Activated T-helper 2 cell treated with anti-CD3 and anti-CD28 coated beads, Interferon-gamma antibody, Interleukin-2, Interleukin-4, amounts not matched to agents 10 μg/mL and 5 μg/mL and 100 μg/mL, durations not matched to agents 14 hours and 24 hours and 36 hours (primary cell): ENCODE measurements at regions of chr14 and their contacts with region 1.

Region 1: GRCh38 chr14:50520947-50521815 is 11.2 kb downstream of the MAP4K5 start:
- DNase-seq: no peak
- H3K4me3 Mint-ChIP-seq: no peak overlapping the region
- H3K27ac Mint-ChIP-seq: peak overlapping the region; percentile 91
- H3K4me1 Mint-ChIP-seq: peaks cover 43% of the 10 kb centered on the region
- H3K27me3 Mint-ChIP-seq: no peaks in the 10 kb centered on the region

Region 2: GRCh38 chr14:49620182-49621113 is 900.7 kb before region 1 on chr14 and contains the starts of genes MGAT2 and RPL36AL:
- intact Hi-C with region 1: loop called (anchors 10 kb)
- DNase-seq: peak; percentile 96
- H3K4me3 Mint-ChIP-seq: peak within 1 kb of the TSS; percentile 91
- H3K27ac Mint-ChIP-seq: peak within 1 kb of the TSS; percentile 94
- H3K4me1 Mint-ChIP-seq: peaks cover 44% of the 10 kb centered on the region
- H3K27me3 Mint-ChIP-seq: no peaks in the 10 kb centered on the region
- total RNA-seq, gene MGAT2: 57.0 and 57.9 TPM in 2 replicates
- total RNA-seq, gene RPL36AL: 278 and 292 TPM in 2 replicates

Region 3: GRCh38 chr14:50038398-50039119 is 482.6 kb before region 1 on chr14:
- intact Hi-C with region 1: loop called (anchors 2 kb)
- DNase-seq: peak; percentile 58
- H3K4me3 Mint-ChIP-seq: peak overlapping the region; percentile 68
- H3K27ac Mint-ChIP-seq: peak overlapping the region; percentile 97
- H3K4me1 Mint-ChIP-seq: peaks cover 48% of the 10 kb centered on the region
- H3K27me3 Mint-ChIP-seq: no peaks in the 10 kb centered on the region

Region 4: DNA sequence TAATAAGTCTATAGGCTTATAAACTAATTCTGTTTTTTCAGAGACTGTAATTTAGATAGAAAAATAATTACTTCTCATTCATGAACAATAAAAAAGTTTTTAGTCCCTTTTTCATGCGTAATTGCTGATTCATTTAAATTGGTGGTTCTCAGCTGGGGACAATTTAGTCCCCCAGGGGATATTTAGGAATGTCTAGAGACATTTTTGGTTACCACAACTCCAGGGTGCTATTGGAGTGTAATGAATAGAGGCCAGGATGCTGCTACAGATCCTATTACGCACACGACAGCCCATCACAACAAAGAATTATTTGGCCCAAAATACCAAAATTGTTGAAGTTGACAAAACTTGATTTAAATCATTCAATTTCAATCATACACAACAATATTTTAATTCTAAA is 382.0 kb before region 1 on chr14:
- intact Hi-C with region 1: no loop called
- DNase-seq: no peak
- H3K4me3 Mint-ChIP-seq: no peak overlapping the region
- H3K27ac Mint-ChIP-seq: no peak overlapping the region
- H3K4me1 Mint-ChIP-seq: no peaks in the 10 kb centered on the region
- H3K27me3 Mint-ChIP-seq: no peaks in the 10 kb centered on the region

Region 5: DNA sequence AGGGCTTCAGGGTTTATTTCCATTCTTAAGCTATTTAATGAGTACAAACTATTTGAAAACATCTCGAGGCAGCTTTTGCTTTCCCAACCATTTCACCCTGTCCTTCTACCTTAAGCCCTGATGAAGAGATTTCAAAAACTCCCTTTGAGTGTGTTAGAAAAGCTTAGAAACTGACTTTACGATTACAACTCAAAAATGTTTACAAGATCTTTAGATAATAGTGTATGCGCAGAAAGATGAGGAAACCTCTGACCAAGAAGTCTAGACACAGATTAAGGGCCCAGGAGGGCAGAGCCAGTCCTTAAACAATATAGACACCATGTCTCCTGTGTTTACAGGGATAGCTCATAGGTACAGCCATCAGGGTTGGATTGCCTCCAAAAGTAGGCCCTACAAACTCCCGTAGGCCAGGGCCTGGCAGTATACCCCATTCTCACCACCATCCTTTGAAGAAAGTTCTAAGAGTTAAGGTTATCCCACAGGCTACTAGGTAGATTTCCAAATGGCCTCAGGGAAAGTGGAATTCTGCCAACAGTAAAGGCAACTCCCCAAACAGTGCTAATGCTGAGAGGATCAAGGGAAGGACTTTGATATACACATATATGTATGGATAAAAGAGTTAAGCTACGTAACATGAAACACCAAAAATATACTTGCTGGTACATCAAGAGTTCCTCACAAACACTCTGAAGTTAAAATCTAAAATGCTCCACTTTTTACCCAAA is 278.4 kb before region 1 on chr14:
- intact Hi-C with region 1: no loop called
- DNase-seq: no peak
- H3K4me3 Mint-ChIP-seq: no peak overlapping the region
- H3K27ac Mint-ChIP-seq: no peak overlapping the region
- H3K4me1 Mint-ChIP-seq: no peaks in the 10 kb centered on the region
- H3K27me3 Mint-ChIP-seq: no peaks in the 10 kb centered on the region

Region 6: DNA sequence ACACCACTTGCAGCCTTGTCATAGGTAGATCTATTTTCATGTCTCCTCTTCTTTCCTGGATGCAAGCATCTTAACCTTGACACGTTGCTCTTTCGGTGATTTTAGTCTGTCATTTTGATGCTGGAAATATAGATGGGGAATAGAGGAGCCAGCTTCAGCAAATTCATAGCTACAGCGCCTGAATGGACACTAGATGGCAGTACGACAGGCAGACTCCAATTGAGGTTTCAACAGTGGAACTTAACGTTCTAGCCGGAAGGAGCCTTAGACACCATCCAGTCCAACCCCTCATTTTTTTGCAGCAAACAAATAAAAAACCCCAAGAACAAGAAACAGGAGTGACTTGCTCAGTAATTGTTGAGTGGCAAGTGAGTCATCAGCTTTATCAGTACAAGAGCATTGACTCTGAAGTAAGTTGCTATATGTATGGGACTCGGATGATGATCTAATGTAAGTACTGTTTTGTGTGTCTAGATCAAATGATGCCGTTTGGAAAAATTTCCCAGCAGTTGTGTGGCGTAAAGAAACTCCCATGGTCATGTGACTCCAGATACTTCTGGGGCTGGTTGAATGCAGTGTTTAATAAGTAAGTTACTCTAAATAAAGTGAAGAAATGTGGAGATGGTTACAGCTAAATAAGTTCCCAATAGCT is 200.0 kb before region 1 on chr14:
- intact Hi-C with region 1: loop called (anchors 1 kb)
- DNase-seq: peak; percentile 67
- H3K4me3 Mint-ChIP-seq: no peak overlapping the region
- H3K27ac Mint-ChIP-seq: no peak overlapping the region
- H3K4me1 Mint-ChIP-seq: peaks cover 21% of the 10 kb centered on the region
- H3K27me3 Mint-ChIP-seq: no peaks in the 10 kb centered on the region

Region 7: DNA sequence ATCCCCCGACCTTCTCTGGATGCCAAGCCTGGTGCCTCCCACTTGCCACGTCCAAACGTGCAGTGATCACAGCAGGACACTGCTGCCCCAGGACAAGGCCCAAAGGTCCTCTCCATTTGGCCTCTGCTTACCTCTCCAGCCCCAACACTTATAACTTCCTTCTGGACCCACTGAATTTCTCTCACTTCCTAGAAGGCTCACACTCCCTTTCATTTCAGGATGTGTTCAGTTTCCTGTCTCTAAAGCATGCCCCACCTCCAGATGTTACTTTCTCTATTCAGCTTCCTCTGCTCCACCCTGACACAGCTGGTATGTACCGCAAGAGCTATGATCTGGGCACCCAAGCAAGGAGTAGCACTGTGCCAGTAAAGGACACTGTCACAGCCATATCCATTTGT is 157.5 kb before region 1 on chr14:
- intact Hi-C with region 1: loop called (anchors 1 kb)
- DNase-seq: peak; percentile 59
- H3K4me3 Mint-ChIP-seq: peak overlapping the region; percentile 79
- H3K27ac Mint-ChIP-seq: peak overlapping the region; percentile 88
- H3K4me1 Mint-ChIP-seq: peaks cover 29% of the 10 kb centered on the region
- H3K27me3 Mint-ChIP-seq: no peaks in the 10 kb centered on the region

Region 8: DNA sequence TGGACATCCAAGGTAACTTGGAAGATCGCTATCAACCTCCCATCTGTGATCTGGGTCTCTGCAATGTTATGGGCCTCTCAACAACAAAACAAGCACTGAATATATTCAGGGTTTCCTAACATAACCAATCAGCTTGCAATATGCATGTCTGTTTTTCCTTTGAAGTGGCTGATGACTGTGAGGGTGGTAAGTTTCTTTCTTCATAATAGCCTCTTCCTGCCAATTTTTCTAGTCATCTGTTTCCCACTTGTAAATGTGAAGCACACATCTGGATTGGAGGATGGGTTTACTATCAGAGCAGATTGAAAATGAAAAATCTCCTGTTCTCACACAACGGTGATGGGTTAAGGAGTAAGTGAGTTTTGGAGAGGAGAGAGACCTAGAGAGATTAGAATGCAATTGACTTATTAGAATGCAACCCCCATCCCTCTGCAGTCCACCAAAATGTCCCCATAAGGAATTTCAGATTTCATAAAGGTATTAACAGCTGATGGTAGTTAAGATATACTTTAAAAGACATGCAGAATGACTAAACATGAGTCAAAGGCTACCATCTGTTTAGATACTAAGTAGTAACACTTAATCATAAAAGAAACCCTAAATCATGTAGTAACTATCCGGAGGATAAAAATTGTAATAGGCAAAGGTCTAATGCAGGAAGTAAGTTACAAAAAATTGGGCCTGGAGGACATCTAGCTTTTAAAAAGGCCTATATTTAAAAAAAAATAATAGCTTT is 205.4 kb after region 1 on chr14:
- intact Hi-C with region 1: loop called (anchors 5 kb)
- DNase-seq: peak; percentile 24
- H3K4me3 Mint-ChIP-seq: peak overlapping the region; percentile 55
- H3K27ac Mint-ChIP-seq: peak overlapping the region; percentile 92
- H3K4me1 Mint-ChIP-seq: peaks cover 32% of the 10 kb centered on the region
- H3K27me3 Mint-ChIP-seq: no peaks in the 10 kb centered on the region